ENCODE measurements at regions of chr5 and their contacts with region 1.

Region 1: GRCh38 chr5:157370967-157371366 is 89.0 kb upstream of the NIPAL4 start:
- H3K4me3 ChIP-seq: no peak overlapping the region
- H3K27ac ChIP-seq: no peak overlapping the region
- H3K4me1 ChIP-seq: no peaks in the 10 kb centered on the region
- CTCF ChIP-seq: no peak

Region 2: DNA sequence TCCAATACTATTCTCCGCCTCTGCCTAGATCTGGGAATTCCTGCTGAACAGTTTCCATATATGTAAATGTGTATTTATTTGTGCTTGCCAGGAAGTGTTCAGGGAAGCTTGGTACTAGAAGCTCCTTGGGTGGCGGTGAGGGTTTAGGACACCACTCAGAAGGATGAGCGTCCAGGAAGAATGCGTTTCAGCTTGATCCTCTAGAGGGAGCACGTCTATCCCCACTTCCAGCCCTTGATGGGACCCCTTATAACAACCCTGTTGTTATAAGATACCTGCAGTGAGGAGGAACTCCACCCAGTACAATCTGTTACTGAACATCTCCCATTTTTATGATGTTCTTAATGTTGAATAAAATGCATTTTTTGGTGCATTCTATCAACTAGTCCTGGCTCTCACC is 16.2 kb before region 1 on chr5:
- CTCF ChIA-PET with region 1: interaction called, 15 read pairs
- POLR2A ChIA-PET with region 1: no interaction called
- H3K4me3 ChIP-seq: no peak overlapping the region
- H3K27ac ChIP-seq: no peak overlapping the region
- H3K4me1 ChIP-seq: no peaks in the 10 kb centered on the region
- CTCF ChIP-seq: no peak